ENCODE measurements at regions of chr6 and their contacts with region 1.

Region 1: GRCh38 chr6:13947611-13948178 is 22.9 kb downstream of the RNF182 start:
- DNase-seq: no peak
- ATAC-seq: no peak
- H3K4me3 ChIP-seq: no peak overlapping the region
- H3K27ac ChIP-seq: no peak overlapping the region
- H3K4me1 ChIP-seq: peaks cover 4% of the 10 kb centered on the region; the same call in 1 of the 2 replicates
- H3K27me3 ChIP-seq: no peaks in the 10 kb centered on the region
- CTCF ChIP-seq: no peak
- POLR2A ChIP-seq: no peak
- RAD21 ChIP-seq: no peak

Region 2: GRCh38 chr6:13985663-13986325 is 38.1 kb after region 1 on chr6:
- CTCF ChIA-PET with region 1: no interaction called
- POLR2A ChIA-PET with region 1: no interaction called
- dilution Hi-C with region 1: no loop called
- in situ Hi-C with region 1: no loop called
- intact Hi-C with region 1: loop called (anchors 5 kb)
- DNase-seq: no peak
- ATAC-seq: no peak
- H3K4me3 ChIP-seq: no peak overlapping the region
- H3K27ac ChIP-seq: no peak overlapping the region
- H3K4me1 ChIP-seq: peaks cover 2% of the 10 kb centered on the region; the same call in 1 of the 2 replicates
- H3K27me3 ChIP-seq: no peaks in the 10 kb centered on the region
- CTCF ChIP-seq: no peak
- POLR2A ChIP-seq: no peak
- RAD21 ChIP-seq: no peak

Region 3: GRCh38 chr6:14066782-14067406 is 119.2 kb after region 1 on chr6:
- CTCF ChIA-PET with region 1: no interaction called
- POLR2A ChIA-PET with region 1: no interaction called
- dilution Hi-C with region 1: no loop called
- in situ Hi-C with region 1: no loop called
- intact Hi-C with region 1: no loop called
- DNase-seq: peak; percentile 80
- ATAC-seq: peak; percentile 76
- H3K4me3 ChIP-seq: no peak overlapping the region
- H3K27ac ChIP-seq: no peak overlapping the region
- H3K4me1 ChIP-seq: peaks cover 4% of the 10 kb centered on the region
- H3K27me3 ChIP-seq: 0 out of 2 replicates have a peak, but pooled peaks cover 1% of the 10 kb centered on the region
- CTCF ChIP-seq: peak; percentile 78
- POLR2A ChIP-seq: no peak
- RAD21 ChIP-seq: peak; percentile 85

Measured in IMR-90 (cell line).